Vagina (tissue), 2 donors: ENCODE measurements at regions of chr19 and their contacts with region 1.

Region 1: GRCh38 chr19:29811125-29812079 is at the start of gene CCNE1:
- DNase-seq: no peak
- H3K4me3 ChIP-seq: peak within 1 kb of the TSS; percentile 62 to 83
- H3K27ac ChIP-seq: peak within 1 kb of the TSS; percentile 56
- H3K4me1 ChIP-seq: peaks cover 14% of the 10 kb centered on the region
- H3K27me3 ChIP-seq: no peaks in the 10 kb centered on the region
- CTCF ChIP-seq: no peak
- POLR2A ChIP-seq: no peak
- total RNA-seq, gene CCNE1: 3.2 TPM

Region 2: GRCh38 chr19:29841559-29842367 is 30.4 kb after region 1 on chr19:
- intact Hi-C with region 1: loop called (anchors 2 kb)
- DNase-seq: no peak
- H3K4me3 ChIP-seq: no peak overlapping the region
- H3K27ac ChIP-seq: no peak overlapping the region
- H3K4me1 ChIP-seq: peaks cover 25% of the 10 kb centered on the region
- H3K27me3 ChIP-seq: no peaks in the 10 kb centered on the region
- CTCF ChIP-seq: no peak
- POLR2A ChIP-seq: no peak

Region 3: DNA sequence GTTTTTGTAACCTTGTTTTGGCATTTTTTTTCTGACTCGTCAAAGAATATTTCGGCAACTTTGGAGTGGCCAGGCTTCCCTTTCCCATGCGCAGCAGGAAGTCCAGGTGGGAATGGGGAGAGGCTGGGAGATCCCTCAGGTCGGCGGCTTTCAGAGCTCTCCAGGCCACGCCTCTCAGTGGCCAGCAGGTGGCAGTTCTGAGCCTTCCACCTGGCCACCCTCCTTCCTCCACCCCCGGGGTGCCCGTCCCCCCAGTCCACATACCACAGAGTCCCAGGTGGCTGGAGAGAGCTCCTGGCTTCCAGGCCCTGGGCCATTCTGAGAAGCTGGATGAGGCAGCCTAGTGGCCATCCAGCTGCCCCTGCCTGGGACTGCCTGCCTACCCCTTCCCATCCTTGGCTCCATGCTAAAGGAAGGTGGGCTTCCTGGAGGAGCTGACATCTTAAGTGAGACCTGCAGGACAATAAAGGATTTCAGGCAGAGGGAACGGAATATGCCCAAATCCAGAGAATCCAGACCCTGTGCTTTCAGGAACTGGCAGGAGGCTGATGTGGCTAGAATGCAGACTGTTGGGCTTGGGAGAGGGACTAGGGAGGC is 46.7 kb after region 1 on chr19:
- intact Hi-C with region 1: no loop called
- DNase-seq: no peak
- H3K4me3 ChIP-seq: no peak overlapping the region
- H3K27ac ChIP-seq: no peak overlapping the region
- H3K4me1 ChIP-seq: no peaks in the 10 kb centered on the region
- H3K27me3 ChIP-seq: no peaks in the 10 kb centered on the region
- CTCF ChIP-seq: no peak
- POLR2A ChIP-seq: no peak